AG04449 (cell line): ENCODE measurements at regions of chr20 and their contacts with region 1.

Region 1: GRCh38 chr20:8722276-8722928 is 346.5 kb upstream of the PLCB4 start:
- DNase-seq: no peak
- H3K4me3 ChIP-seq: no peak overlapping the region
- CTCF ChIP-seq: peak; percentile 64

Region 2: DNA sequence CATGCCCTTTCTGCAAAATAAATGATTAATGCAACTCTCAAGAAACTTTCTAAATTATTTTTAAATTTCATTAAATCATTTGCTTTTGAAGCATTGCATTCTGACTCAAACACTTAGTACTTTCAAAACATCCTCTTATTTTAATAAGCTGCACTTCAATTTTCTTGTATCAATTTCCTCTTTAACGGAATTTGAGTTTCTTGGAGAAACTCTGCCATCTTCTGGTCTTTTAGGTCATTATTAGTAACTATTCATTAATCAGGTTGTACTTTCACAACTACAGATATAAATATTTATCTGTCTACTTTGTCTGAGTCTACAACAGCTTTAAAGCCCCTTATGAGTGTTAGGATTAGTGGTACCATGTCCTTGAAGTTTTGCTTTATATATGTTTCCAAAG is 733.0 kb before region 1 on chr20:
- CTCF ChIA-PET with region 1: interaction called, 119 read pairs
- POLR2A ChIA-PET with region 1: no interaction called
- DNase-seq: no peak
- H3K4me3 ChIP-seq: no peak overlapping the region
- CTCF ChIP-seq: no peak

Region 3: GRCh38 chr20:8094850-8095249 is 627.6 kb before region 1 on chr20:
- CTCF ChIA-PET with region 1: interaction called, 12 read pairs
- POLR2A ChIA-PET with region 1: no interaction called
- DNase-seq: no peak
- H3K4me3 ChIP-seq: no peak overlapping the region
- CTCF ChIP-seq: no peak

Region 4: GRCh38 chr20:8360035-8360434 is 362.4 kb before region 1 on chr20:
- CTCF ChIA-PET with region 1: interaction called, 11 read pairs
- POLR2A ChIA-PET with region 1: no interaction called
- DNase-seq: no peak
- H3K4me3 ChIP-seq: no peak overlapping the region
- CTCF ChIP-seq: no peak

Region 5: GRCh38 chr20:8471465-8471864 is 250.9 kb before region 1 on chr20:
- CTCF ChIA-PET with region 1: interaction called, 21 read pairs
- POLR2A ChIA-PET with region 1: no interaction called
- DNase-seq: no peak
- H3K4me3 ChIP-seq: no peak overlapping the region
- CTCF ChIP-seq: no peak

Region 6: GRCh38 chr20:8670893-8671215 is 51.5 kb before region 1 on chr20:
- CTCF ChIA-PET with region 1: interaction called, 11 read pairs
- POLR2A ChIA-PET with region 1: no interaction called
- DNase-seq: peak; percentile 40
- H3K4me3 ChIP-seq: no peak overlapping the region
- CTCF ChIP-seq: no peak

Region 7: GRCh38 chr20:8891039-8891438 is 168.6 kb after region 1 on chr20:
- CTCF ChIA-PET with region 1: no interaction called
- POLR2A ChIA-PET with region 1: no interaction called
- DNase-seq: no peak
- H3K4me3 ChIP-seq: no peak overlapping the region
- CTCF ChIP-seq: no peak